MCF 10A (cell line): ENCODE measurements at regions of chr2 and their contacts with region 1.

Region 1: GRCh38 chr2:238784671-238785527 is 63.0 kb upstream of the TWIST2 start:
- DNase-seq: peak; percentile 72
- H3K4me3 Mint-ChIP-seq: peak overlapping the region; percentile 14
- H3K27ac Mint-ChIP-seq: peak overlapping the region; percentile 80
- H3K4me1 Mint-ChIP-seq: peaks cover 17% of the 10 kb centered on the region
- H3K27me3 Mint-ChIP-seq: no peaks in the 10 kb centered on the region
- CTCF ChIP-seq: peak; percentile 86

Region 2: GRCh38 chr2:238362626-238363025 is 422.3 kb before region 1 on chr2:
- CTCF ChIA-PET with region 1: interaction called, 18 read pairs
- POLR2A ChIA-PET with region 1: no interaction called
- intact Hi-C with region 1: loop called (anchors 1 kb)
- DNase-seq: no peak
- H3K4me3 Mint-ChIP-seq: no peak overlapping the region
- H3K27ac Mint-ChIP-seq: no peak overlapping the region
- H3K4me1 Mint-ChIP-seq: peaks cover 1% of the 10 kb centered on the region
- H3K27me3 Mint-ChIP-seq: no peaks in the 10 kb centered on the region
- CTCF ChIP-seq: no peak

Region 3: DNA sequence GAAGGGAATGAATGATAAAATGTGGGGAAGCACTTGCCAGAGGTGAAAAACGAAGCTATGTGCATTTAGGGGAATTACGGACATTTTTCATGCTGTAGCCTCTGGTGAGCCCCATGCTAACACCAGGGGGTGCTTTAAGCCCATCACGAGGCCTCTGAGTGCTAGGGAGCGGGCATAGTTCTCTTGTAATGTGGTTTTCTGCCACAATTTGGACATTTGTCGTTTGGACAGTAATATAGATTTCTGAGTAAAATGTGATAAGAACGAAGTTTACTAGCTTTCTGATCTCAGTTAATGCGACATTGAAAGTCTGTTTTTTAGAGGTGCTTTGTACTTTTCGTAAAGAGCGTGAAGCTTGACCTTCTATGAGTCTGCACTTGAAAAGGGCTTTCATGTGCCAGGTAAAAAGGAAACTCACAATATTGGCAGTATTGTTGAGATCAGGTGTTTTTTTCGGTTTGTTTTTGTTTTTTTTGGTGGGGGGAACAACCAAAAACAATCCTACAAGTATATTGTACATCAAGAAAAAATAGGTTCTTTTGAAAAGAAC is 414.0 kb before region 1 on chr2:
- CTCF ChIA-PET with region 1: interaction called, 13 read pairs
- POLR2A ChIA-PET with region 1: no interaction called
- intact Hi-C with region 1: loop called (anchors 1 kb)
- DNase-seq: peak; percentile 71
- H3K4me3 Mint-ChIP-seq: no peak overlapping the region
- H3K27ac Mint-ChIP-seq: no peak overlapping the region
- H3K4me1 Mint-ChIP-seq: peaks cover 6% of the 10 kb centered on the region
- H3K27me3 Mint-ChIP-seq: no peaks in the 10 kb centered on the region
- CTCF ChIP-seq: peak; percentile 75

Region 4: DNA sequence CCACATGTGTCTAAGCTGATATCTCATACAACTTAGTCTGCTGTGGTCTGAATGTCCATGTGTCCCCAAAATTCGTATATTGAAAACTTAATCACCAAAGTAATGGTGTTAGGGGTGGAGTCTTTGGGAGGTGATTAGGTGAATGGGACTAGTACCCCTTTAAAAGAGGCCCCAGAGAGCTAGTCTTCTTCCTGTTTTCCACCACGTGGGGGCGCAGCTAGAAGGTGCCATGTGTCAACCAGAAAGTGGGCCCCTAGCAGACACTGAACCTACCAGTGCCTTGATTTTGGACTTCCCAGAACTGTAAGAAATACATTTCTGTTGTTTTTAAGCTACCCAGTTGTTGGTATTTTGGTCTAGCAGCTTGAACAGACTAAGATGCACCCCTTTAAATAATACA is 271.6 kb before region 1 on chr2:
- CTCF ChIA-PET with region 1: interaction called, 17 read pairs
- POLR2A ChIA-PET with region 1: interaction called, 5 read pairs
- intact Hi-C with region 1: loop called (anchors 1 kb)
- DNase-seq: peak; percentile 79
- H3K4me3 Mint-ChIP-seq: no peak overlapping the region
- H3K27ac Mint-ChIP-seq: no peak overlapping the region
- H3K4me1 Mint-ChIP-seq: no peaks in the 10 kb centered on the region
- H3K27me3 Mint-ChIP-seq: no peaks in the 10 kb centered on the region
- CTCF ChIP-seq: peak; percentile 68

Region 5: DNA sequence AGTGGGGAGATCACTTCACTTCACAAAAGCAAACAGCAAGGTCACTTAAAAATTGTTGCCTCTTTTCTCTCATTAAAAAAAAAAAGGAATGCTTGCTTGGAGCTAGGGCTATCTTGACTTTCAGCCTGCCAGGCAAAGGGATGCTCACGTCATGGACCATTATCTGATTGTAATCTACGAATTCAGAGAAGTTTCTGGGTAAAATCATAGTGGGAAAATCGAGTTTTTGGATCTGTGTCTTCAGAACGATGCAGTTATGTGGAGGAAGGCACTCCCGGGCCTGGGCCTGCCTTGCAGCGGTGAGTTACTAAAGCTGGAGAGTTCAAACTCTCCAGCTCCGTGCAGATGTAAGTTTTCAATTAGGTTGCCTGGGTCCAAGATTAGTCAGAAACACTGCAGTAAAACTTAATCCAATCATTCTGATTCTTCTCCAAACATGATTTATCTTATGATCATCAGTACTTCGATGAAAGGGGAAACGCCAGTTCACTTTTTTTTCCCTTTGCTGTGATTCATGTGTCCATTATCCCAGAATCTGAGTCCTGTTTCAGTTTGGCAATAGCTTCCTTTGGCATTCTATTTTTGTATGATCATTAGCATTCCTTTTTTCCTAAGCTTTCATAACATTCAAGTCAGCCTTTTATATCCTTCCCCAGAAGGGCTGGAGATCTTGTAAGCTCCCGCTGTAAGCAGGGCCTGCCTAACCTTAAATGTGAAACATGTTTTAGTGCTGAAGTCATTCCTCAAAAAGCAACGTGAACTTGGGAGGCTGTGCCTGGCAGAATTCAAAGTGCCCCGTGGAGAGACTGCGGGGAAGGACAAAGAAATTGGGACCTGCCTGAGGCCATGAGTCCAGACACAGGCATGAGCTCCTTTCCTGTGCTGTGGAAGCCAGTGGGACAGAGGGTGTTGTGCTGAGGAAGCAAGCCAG is 56.3 kb before region 1 on chr2:
- CTCF ChIA-PET with region 1: interaction called, 18 read pairs
- POLR2A ChIA-PET with region 1: interaction called, 40 read pairs
- intact Hi-C with region 1: no loop called
- DNase-seq: peak; percentile 68
- H3K4me3 Mint-ChIP-seq: peak overlapping the region; percentile 28
- H3K27ac Mint-ChIP-seq: peak overlapping the region; percentile 90
- H3K4me1 Mint-ChIP-seq: peaks cover 42% of the 10 kb centered on the region
- H3K27me3 Mint-ChIP-seq: no peaks in the 10 kb centered on the region
- CTCF ChIP-seq: no peak